Cardiac septum (tissue), 1 donor: ENCODE measurements at regions of chr16 and their contacts with region 1.

Region 1: DNA sequence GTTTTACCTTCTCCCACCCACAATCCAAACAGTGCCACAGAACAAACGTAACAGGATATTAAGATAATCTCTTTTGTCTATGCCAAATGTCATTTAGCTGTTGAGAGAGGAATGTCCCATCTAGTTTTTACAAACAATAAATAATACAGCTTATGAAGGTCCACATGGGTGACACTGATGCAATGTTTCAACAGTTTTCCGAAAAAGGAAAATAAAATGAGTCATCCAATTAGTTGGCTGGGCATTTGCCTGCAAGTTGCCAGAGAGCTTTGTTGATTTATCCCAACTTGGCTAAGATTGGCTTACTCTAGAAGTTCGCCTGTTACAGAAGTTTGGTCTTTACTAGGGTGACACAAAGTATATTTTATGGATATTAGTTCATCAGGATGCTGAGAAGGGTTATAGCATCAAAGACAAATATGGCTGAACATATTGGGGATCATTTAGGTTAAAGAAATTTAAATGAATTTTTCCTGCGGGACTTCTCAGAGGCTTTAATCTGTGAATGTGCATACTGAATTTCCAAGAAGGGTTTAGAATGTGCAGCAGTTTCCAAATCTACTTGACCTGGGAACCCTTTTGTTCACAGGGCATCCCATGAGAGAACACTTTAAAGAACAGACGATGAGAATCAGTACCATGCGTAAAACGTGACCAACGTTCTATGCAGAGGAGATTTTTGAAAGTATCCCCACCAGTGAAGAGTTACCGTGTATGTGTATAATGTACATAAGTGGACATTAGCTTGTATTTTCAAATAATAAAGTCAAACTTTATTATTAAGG is 73.1 kb downstream of the CDH13 start:
- DNase-seq: no peak

Region 2: GRCh38 chr16:82653550-82654511 is 46.1 kb before region 1 on chr16:
- intact Hi-C with region 1: loop called (anchors 5 kb)
- DNase-seq: no peak

Region 3: DNA sequence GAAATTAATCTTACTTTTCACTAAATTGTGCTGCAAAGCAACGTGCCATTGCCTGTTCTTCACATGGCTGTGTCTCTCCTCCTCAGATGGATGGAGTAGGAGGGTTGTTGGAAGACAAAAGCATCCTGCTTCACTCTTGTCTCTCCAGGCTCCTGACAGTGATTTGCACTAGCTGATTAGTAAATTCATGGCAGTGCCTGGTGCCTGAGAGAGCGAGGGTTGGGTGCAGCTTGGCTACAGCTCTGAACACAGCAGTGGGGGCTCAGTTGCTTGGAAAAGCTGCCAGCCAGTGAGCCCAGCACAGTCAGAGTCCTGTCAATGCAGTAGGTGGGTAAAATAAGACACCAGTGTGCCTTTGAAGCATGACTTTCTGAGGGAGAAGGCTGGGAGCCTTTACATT is 35.7 kb before region 1 on chr16:
- intact Hi-C with region 1: no loop called
- DNase-seq: no peak

Region 4: DNA sequence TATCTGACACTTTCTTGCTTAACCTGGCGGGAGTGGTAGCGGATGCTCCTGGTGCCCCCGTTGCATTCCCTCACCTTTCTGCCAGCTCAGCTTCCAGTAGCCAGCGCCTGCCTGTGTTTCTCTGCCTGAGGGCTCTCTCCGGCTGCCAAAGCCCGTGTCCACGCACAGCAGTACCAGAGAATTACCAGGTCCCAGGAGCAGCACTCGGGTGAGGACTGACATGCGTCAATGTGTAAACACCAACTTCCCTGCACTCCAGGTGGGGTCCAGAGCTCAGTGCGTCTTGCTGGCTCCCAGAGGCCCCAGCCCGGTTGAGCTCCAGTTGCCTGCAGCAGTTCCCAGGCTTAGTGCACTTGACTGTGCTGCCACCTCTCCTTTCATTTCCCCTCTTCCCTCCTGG is 18.3 kb before region 1 on chr16:
- intact Hi-C with region 1: no loop called
- DNase-seq: no peak

Region 5: GRCh38 chr16:82738699-82739098 is 38.8 kb after region 1 on chr16:
- intact Hi-C with region 1: loop called (anchors 5 kb)
- DNase-seq: no peak